ENCODE measurements at regions of chr6 and their contacts with region 1.

Region 1: GRCh38 chr6:87929843-87930288 is 117.8 kb upstream of the SPACA1 start:
- DNase-seq: peak; percentile 90
- H3K4me3 ChIP-seq: no peak overlapping the region
- H3K27ac ChIP-seq: no peak overlapping the region
- H3K4me1 ChIP-seq: peaks cover 0 to 7% (median 3%) of the 10 kb centered on the region in 4 donors
- H3K27me3 ChIP-seq: no peaks in the 10 kb centered on the region
- CTCF ChIP-seq: peak; percentile 73 to 95 (median 84)
- EP300 ChIP-seq: no peak
- POLR2A ChIP-seq: no peak

Region 2: DNA sequence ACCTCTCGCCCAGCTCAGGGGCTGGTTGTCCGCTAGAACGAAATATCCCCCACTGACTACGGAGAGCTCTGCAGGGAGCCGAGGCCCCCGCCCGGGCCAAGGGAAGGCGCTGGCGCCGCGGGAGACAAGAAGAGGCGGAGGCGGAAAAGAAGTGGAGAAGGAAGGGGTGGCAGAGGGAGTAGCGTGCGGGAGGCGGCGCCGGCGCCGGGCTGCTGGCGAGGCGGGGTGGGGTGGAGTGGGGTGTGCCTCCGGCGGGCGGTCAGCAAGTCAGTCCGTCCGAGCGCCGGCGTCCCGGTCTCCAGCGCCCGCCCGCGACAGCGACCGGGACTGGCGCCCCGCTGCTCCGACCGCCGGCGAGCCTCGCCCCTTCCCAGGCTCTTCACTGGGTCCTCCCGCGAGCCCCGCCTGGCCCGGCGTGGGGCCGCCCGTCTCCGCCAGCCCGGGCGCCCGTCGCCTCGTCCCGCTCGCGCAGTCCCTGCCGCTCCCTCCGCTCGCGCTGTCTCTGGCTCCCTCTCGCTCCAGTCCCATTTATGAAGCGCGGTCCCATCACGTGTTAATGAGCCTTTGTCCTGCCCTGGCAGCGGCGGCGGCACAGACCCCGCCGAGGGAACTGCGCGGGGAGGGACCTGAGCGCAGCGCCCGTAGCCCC is 236.1 kb after region 1 on chr6 and contains the start of gene CNR1:
- intact Hi-C with region 1: loop called (anchors 1 kb)
- DNase-seq: peak; percentile 89
- H3K4me3 ChIP-seq: peak within 1 kb of the TSS; percentile 51 to 72 (median 68)
- H3K27ac ChIP-seq: peak within 1 kb of the TSS; percentile 40 to 84 (median 81)
- H3K4me1 ChIP-seq: peaks cover 0 to 32% (median 18%) of the 10 kb centered on the region in 4 donors
- H3K27me3 ChIP-seq: peaks cover 0 to 35% (median 3%) of the 10 kb centered on the region in 3 donors
- CTCF ChIP-seq: peak in 1 of 4 experiments; percentile 41
- EP300 ChIP-seq: no peak
- POLR2A ChIP-seq: peak in 1 of 2 donors; percentile 14
- total RNA-seq, gene CNR1: 19.1 to 27.7 (median 24.6) TPM

Region 3: GRCh38 chr6:88236612-88237360 is 306.9 kb after region 1 on chr6:
- intact Hi-C with region 1: loop called (anchors 2 kb)
- DNase-seq: no peak
- H3K4me3 ChIP-seq: no peak overlapping the region
- H3K27ac ChIP-seq: no peak overlapping the region
- H3K4me1 ChIP-seq: peaks cover 0 to 6% (median 0%) of the 10 kb centered on the region in 4 donors
- H3K27me3 ChIP-seq: no peaks in the 10 kb centered on the region
- CTCF ChIP-seq: no peak
- EP300 ChIP-seq: no peak
- POLR2A ChIP-seq: no peak

Region 4: GRCh38 chr6:88492824-88493223 is 563.0 kb after region 1 on chr6:
- intact Hi-C with region 1: loop called (anchors 2 kb)
- DNase-seq: no peak
- H3K4me3 ChIP-seq: no peak overlapping the region
- H3K27ac ChIP-seq: no peak overlapping the region
- H3K4me1 ChIP-seq: no peaks in the 10 kb centered on the region
- H3K27me3 ChIP-seq: no peaks in the 10 kb centered on the region
- CTCF ChIP-seq: peak in 2 of 4 experiments; percentile 30 to 31
- EP300 ChIP-seq: no peak
- POLR2A ChIP-seq: no peak

Region 5: DNA sequence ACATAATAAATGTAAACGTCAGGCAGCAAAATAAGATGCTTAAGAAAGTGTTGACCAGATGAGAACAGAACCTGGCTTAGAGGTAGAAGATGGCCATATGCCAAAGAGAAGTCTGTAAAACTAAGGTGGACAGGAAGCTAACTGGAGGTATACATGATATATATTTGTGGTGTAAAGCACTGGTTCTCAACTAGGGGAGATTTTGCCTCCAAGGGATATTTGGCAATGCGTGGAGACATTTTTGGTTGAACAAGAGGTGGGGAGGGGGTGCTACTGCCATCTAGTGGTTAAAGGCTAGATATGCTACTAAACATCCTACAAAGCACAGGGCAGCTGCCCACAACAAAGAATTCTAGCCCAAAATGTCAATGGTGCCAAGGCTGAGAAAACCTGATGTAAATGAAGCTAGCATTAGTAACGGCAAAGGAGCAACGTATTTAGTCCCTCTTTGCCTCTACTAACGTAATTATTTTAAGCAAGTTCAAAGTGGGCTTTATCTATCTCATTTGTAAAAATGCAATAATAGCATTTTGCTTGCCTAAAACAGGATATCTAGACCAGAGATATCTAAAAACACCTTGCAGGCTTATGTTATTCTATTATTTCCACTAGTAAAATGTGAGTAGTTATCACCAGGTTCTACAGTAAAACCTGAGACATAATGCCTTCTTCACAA is 851.0 kb after region 1 on chr6:
- intact Hi-C with region 1: loop called (anchors 5 kb)
- DNase-seq: peak; percentile 65
- H3K4me3 ChIP-seq: no peak overlapping the region
- H3K27ac ChIP-seq: no peak overlapping the region
- H3K4me1 ChIP-seq: no peaks in the 10 kb centered on the region
- H3K27me3 ChIP-seq: no peaks in the 10 kb centered on the region
- CTCF ChIP-seq: peak; percentile 30 to 82 (median 54)
- EP300 ChIP-seq: no peak
- POLR2A ChIP-seq: no peak

Region 6: GRCh38 chr6:88870717-88871330 is 941.0 kb after region 1 on chr6:
- intact Hi-C with region 1: loop called (anchors 5 kb)
- DNase-seq: no peak
- H3K4me3 ChIP-seq: no peak overlapping the region
- H3K27ac ChIP-seq: no peak overlapping the region
- H3K4me1 ChIP-seq: peaks cover 0 to 3% (median 1%) of the 10 kb centered on the region in 4 donors
- H3K27me3 ChIP-seq: no peaks in the 10 kb centered on the region
- CTCF ChIP-seq: peak in 3 of 4 experiments; percentile 48 to 60 (median 54)
- EP300 ChIP-seq: no peak
- POLR2A ChIP-seq: no peak

Measured in sigmoid colon (tissue), 7 donors.